GM10248 (cell line): ENCODE measurements at regions of chr12 and their contacts with region 1.

Region 1: GRCh38 chr12:56616925-56617324 is 13.2 kb downstream of the BAZ2A start:
- DNase-seq: no peak
- CTCF ChIP-seq: no peak

Region 2: GRCh38 chr12:56601503-56601902 is 15.4 kb before region 1 on chr12:
- CTCF ChIA-PET with region 1: interaction called, 19 read pairs
- POLR2A ChIA-PET with region 1: interaction called, 3 read pairs
- DNase-seq: peak; percentile 42
- CTCF ChIP-seq: no peak

Region 3: DNA sequence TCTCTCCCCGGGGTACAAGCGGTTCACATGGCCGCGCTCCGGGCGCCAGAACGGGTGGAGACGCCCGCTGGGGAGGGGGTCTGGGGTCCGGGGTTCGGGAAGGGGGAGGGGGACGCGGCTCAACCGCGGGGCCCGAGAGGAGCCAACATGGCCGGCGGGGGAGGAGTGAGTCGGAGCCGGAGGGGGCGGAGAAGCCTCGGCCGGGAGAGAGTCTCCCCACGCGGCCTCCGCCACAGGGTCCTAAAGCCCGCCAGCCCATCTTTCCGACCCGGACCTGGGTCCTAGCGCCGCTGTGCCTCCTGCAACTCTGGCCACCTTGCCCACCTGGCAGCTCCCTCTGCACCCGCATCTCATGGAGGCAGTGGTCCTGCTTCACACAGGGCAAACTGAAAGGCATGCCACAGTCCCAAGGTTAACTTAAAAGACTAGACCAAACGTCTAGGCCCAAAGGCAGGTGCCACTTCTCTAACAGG is 13.3 kb after region 1 on chr12 and contains the start of gene BAZ2A:
- CTCF ChIA-PET with region 1: interaction called, 44 read pairs
- POLR2A ChIA-PET with region 1: interaction called, 13 read pairs
- DNase-seq: peak; percentile 90
- CTCF ChIP-seq: no peak

Region 4: DNA sequence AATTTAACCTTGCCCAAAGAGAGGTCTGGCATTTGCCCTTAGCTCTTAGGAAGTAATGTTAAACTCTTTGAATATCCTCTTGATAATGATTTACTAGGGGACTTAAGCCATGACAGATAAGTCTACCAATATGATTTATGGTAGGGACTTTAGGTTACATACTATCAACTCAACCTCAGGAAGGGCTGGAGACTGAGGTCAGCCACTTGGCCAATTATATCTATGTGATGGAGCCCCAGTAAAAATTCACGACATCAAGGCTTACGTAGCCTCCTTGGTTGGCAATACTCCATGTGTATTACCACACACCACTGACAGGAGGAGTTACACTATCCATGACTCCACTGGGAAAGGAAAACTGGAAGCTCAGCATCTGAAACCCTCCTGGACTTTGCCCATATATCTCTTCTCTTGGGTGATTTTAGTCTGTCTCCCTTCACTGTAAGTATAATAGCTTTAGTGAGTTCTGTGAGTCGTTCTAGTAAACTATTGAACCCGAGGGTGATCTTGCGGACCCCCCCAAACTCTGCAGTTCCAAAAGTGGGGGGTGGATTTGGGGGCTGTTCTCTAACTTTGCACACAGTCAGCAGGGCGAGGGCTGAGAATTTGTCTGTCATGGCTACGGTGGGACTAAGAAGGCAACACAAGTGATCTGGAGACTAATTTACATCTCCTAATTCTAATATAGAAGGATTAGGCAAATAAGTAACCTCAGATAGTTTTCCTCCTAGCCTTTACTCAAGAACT is 751.6 kb after region 1 on chr12:
- CTCF ChIA-PET with region 1: no interaction called
- POLR2A ChIA-PET with region 1: no interaction called
- DNase-seq: no peak
- CTCF ChIP-seq: no peak